ENCODE measurements at regions of chr18 and their contacts with region 1.

Region 1: GRCh38 chr18:58947136-58947732 is 82.6 kb downstream of the ZNF532 start:
- DNase-seq: no peak
- ATAC-seq: peak in 2 of 4 donors; percentile 38 to 39
- H3K4me3 ChIP-seq: no peak overlapping the region
- H3K27ac ChIP-seq: no peak overlapping the region
- H3K4me1 ChIP-seq: peaks cover 6% of the 10 kb centered on the region
- H3K27me3 ChIP-seq: no peaks in the 10 kb centered on the region
- CTCF ChIP-seq: no peak

Region 2: DNA sequence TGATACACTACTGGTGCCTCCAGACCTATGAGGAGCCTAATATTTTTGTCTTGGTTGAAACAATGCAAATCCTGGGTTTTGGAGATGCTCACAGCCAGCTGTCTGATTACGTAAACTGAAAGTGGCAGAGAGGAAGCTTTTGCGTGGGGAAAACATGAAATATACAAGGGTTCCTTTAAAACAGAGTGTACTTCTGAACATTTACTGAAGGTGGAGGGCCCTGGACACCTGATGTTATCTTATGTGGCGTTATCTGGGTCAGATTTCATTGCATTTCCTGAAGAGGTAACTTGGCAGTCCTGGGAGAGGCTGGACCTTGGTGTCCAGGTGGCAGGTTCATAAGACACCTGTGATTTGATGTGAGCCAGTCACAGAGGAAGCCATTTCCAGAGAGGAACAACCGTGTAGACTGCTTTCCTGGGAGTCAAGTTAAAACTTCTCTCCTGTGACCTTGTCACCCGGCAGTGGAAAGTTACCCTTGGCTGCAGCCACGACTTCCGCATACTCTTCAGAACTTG is 798.2 kb before region 1 on chr18:
- intact Hi-C with region 1: no loop called
- DNase-seq: no peak
- ATAC-seq: no peak
- H3K4me3 ChIP-seq: no peak overlapping the region
- H3K27ac ChIP-seq: no peak overlapping the region
- H3K4me1 ChIP-seq: no peaks in the 10 kb centered on the region
- H3K27me3 ChIP-seq: no peaks in the 10 kb centered on the region
- CTCF ChIP-seq: no peak

Region 3: GRCh38 chr18:58541789-58542425 is 405.3 kb before region 1 on chr18:
- intact Hi-C with region 1: no loop called
- DNase-seq: no peak
- ATAC-seq: peak; percentile 81 to 90 (median 86)
- H3K4me3 ChIP-seq: no peak overlapping the region
- H3K27ac ChIP-seq: peak overlapping the region; percentile 83
- H3K4me1 ChIP-seq: peaks cover 62% of the 10 kb centered on the region
- H3K27me3 ChIP-seq: no peaks in the 10 kb centered on the region
- CTCF ChIP-seq: no peak

Region 4: GRCh38 chr18:58864146-58865032 is 82.8 kb before region 1 on chr18 and contains the start of gene ZNF532:
- intact Hi-C with region 1: loop called in 1 of 2 experiments (anchors 5 kb)
- DNase-seq: no peak
- ATAC-seq: peak; percentile 24 to 51 (median 32)
- H3K4me3 ChIP-seq: peak within 1 kb of the TSS; percentile 73
- H3K27ac ChIP-seq: peak within 1 kb of the TSS; percentile 99
- H3K4me1 ChIP-seq: peaks cover 76% of the 10 kb centered on the region
- H3K27me3 ChIP-seq: no peaks in the 10 kb centered on the region
- CTCF ChIP-seq: no peak
- total RNA-seq, gene ZNF532: 68.8 to 105 (median 84.7) TPM